ENCODE measurements at regions of chr16 and their contacts with region 1.

Region 1: DNA sequence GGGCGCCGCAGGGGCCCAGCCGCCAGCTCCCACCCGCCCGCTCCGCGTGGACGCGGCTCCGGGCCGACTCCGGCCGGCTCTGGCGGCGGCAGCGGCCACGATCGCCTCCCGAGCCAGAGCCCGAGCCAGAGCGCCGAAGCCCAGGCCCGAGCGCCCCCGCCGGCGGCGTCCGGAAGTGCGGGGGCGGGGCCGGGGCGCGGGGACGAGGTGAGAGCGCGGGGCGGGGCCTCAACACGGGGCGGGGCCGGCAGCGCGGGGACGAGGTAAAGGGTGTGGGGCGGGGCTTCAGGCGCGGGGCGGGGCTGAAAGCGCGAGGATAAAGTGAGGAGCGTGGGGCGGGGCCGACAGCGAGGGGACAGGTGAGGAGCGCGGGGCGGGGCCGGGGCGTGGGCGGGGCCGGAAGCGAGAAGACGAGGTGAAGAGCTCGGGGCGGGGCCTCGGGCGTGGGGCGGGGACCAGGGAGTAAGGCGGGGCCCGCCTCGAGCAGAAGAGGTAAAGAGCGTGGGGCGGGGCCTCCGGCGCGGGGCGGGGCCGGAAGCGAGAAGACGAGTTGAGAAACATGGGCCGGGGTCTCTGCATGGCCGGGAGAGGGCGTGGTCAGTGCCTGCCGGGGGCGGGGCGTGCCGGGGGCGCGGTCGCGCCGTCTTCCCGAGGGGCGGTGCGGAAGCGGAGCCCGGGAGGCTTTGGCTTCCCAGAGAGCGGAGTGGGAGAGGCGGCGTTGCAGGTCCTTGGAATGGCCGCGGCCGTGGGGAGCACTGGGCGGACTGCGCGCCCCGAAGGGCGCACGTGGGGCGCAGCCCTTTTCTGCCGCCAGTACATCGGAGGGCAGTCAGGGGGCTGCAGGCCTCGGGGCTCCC is at the start of gene AXIN1:
- DNase-seq: peak; percentile 100
- ATAC-seq: peak; percentile 95
- total RNA-seq, gene AXIN1: 14.0 TPM

Region 2: DNA sequence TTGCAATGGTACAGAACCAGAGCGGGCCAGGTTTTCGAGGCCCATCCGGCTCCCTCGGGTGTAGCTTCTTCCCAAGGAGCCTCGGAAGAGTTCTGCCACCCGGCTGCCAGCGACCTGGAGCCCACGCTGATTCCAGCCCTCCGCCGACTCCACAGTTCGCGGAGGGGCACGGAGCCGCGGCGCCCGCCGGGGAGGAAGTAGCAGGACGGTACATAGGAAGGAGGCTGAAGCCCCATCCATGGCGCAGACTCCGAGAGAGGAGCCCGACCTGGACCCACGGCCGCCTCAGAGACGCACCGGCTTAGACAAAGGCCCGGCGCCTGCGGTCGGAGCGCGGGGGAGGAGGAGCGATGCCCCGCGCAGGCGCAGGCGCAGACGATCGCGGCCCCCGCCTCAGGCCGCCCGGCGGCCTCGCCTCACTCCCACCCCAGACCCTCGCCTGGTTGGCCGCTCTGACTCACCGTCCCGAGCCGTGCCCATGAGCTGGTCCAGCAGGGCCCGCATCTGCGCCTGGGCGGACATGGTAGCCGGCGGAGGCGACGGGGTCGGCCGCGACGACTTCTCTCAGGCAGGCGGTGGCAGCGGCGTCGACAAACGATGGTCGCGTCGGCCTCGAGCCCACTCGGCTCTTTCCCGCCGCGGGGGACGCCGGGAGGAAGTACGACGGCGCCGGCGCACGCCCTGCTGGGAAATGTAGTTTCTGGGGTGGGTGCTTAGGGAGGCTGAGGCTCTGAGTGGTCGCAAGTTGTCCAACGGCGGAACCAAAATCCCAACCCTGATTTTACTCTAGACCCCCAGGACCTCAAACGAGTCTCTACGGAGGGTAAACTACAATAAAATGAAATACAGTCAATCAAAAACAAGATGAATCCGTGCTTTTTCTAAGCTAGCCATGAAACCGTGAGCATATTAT is 123.7 kb before region 1 on chr16 and contains the start of gene LUC7L:
- intact Hi-C with region 1: loop called (anchors 5 kb)
- DNase-seq: peak; percentile 93
- ATAC-seq: peak; percentile 98
- total RNA-seq, gene LUC7L: 25.0 TPM

Region 3: GRCh38 chr16:684067-684794 is 331.5 kb after region 1 on chr16 and contains the start of gene JMJD8:
- intact Hi-C with region 1: no loop called
- DNase-seq: peak; percentile 99
- ATAC-seq: peak; percentile 76
- total RNA-seq, gene JMJD8: 42.4 TPM

Measured in Right ventricle myocardium superior (tissue), 1 donor.